ENCODE measurements at regions of chr13 and their contacts with region 1.

Region 1: GRCh38 chr13:106520205-106521054 is 15.0 kb downstream of the EFNB2 start:
- DNase-seq: no peak
- H3K4me3 ChIP-seq: no peak overlapping the region
- H3K27ac ChIP-seq: no peak overlapping the region
- H3K4me1 ChIP-seq: no peaks in the 10 kb centered on the region
- H3K27me3 ChIP-seq: peaks cover 2% of the 10 kb centered on the region
- CTCF ChIP-seq: peak; percentile 25; the same call in 1 of the 2 replicates

Region 2: DNA sequence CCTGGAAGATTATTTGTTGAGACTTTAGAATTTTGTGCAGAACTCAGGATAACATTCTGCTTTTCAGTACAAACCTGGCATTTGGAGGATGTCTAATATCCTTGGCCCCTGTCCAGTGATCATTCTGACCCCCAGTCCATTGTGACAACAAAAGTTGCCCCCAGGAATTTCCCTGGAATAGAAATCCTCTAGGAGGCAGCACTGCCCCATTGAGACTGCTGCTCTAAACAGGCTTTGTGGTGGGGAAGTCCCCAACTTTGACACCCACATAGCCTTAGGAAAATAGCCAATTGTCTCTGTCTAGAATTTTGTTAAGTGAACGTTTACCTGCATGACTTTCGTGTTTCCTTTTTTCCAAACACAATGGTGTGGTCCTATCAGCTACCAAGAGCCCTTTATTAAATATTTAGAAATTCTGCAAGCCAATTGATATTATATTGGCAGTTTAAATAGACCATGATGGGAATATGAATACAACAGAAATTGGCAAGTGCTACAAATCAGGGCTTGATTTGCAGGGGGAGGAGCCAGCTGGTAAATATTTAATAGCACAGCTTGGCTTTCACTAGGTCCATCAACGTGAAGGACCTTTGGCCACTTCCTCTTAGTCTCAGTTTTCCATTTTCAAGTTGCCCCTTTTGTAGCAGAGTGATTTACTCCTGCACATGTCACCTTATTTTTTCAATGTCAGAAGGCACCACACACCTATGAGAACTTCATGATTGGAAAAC is 436.6 kb before region 1 on chr13:
- CTCF ChIA-PET with region 1: no interaction called
- POLR2A ChIA-PET with region 1: no interaction called
- intact Hi-C with region 1: loop called (anchors 2 kb)
- DNase-seq: peak; percentile 5
- H3K4me3 ChIP-seq: no peak overlapping the region
- H3K27ac ChIP-seq: no peak overlapping the region
- H3K4me1 ChIP-seq: no peaks in the 10 kb centered on the region
- H3K27me3 ChIP-seq: no peaks in the 10 kb centered on the region
- CTCF ChIP-seq: peak; percentile 38

Region 3: GRCh38 chr13:106432636-106433035 is 87.8 kb before region 1 on chr13:
- CTCF ChIA-PET with region 1: no interaction called
- POLR2A ChIA-PET with region 1: no interaction called
- intact Hi-C with region 1: no loop called
- DNase-seq: no peak
- H3K4me3 ChIP-seq: no peak overlapping the region
- H3K27ac ChIP-seq: no peak overlapping the region
- H3K4me1 ChIP-seq: no peaks in the 10 kb centered on the region
- H3K27me3 ChIP-seq: no peaks in the 10 kb centered on the region
- CTCF ChIP-seq: no peak

Measured in A673 (cell line).